PC-3 (cell line): ENCODE measurements at regions of chr10 and their contacts with region 1.

Region 1: DNA sequence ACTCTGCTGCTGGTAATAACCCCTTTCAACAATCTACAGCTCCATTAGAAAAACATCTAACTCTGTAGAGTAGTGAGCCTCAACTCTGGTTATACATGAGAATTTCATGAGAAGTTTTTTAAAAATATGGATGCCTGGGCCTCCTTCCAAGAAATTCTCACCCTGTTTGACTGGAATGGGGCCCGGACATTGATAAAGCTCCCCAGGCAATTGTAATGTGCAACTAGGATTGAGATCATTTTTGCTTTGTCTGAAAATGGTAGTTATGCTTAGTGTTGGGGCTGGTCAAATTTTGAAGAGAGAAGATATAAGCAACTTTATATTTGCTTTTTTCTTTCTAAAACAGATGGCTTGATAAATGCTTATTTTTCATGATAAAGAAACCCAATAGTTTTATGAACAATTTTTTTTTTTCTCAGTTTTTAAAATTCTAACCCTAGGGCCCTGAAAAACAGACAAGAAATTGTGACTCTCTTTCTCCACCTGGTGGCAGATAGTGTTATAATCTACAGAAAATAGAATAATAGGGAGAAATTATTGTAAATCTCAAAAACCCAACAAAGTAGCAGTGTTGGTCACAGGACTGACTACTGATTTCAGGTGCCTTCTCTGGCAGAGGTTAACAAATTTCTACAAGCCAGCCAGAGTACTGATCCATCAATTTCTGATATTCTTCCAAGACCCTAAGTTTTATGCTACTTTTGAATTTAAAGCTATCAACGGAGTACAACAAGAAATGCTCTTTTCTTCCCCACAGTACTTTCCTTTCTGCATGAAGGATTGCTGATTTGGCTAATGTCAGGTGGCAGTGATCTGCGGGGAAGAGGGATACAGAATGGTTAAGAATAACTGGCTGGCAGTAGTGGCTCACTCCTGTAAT is 174.8 kb downstream of the DKK1 start:
- DNase-seq: peak; percentile 99
- ATAC-seq: peak; percentile 21
- H3K4me3 ChIP-seq: peak overlapping the region; percentile 10; the same call in 1 of the 2 replicates
- H3K27ac ChIP-seq: peak overlapping the region; percentile 78
- H3K4me1 ChIP-seq: peaks cover 64% of the 10 kb centered on the region
- H3K27me3 ChIP-seq: no peaks in the 10 kb centered on the region
- CTCF ChIP-seq: peak; percentile 99

Region 2: GRCh38 chr10:52215745-52216361 is 273.0 kb before region 1 on chr10:
- CTCF ChIA-PET with region 1: no interaction called
- POLR2A ChIA-PET with region 1: no interaction called
- intact Hi-C with region 1: loop called (anchors 1 kb)
- DNase-seq: peak; percentile 96
- ATAC-seq: peak; percentile 58
- H3K4me3 ChIP-seq: no peak overlapping the region
- H3K27ac ChIP-seq: peak overlapping the region; percentile 65
- H3K4me1 ChIP-seq: peaks cover 24% of the 10 kb centered on the region
- H3K27me3 ChIP-seq: no peaks in the 10 kb centered on the region
- CTCF ChIP-seq: peak; percentile 99

Region 3: DNA sequence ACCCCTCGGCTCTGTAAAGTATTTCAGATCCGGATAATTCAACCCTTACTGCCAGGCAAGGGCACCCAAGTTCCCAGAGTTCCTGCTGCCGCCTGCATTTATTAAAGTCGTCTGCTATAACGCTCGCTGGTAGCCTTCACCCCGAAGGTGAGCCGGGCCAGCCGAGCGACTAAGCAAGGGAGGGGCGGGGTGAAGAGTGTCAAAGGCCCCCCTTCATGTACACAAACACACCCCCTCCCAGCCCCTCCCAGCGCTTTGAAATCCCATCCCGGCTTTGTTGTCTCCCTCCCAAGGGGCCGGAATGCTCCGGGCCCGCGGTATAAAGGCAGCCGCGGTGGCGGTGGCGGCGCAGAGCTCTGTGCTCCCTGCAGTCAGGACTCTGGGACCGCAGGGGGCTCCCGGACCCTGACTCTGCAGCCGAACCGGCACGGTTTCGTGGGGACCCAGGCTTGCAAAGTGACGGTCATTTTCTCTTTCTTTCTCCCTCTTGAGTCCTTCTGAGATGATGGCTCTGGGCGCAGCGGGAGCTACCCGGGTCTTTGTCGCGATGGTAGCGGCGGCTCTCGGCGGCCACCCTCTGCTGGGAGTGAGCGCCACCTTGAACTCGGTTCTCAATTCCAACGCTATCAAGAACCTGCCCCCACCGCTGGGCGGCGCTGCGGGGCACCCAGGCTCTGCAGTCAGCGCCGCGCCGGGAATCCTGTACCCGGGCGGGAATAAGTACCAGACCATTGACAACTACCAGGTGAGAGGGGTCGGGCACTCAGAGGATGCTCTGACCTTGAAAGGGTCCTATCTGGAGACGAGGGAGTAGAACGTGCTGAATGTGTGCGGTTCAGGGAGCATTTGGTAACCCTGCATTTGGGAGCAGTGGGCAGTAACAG is 174.7 kb before region 1 on chr10 and contains the start of gene DKK1:
- CTCF ChIA-PET with region 1: interaction called, 56 read pairs
- POLR2A ChIA-PET with region 1: interaction called, 30 read pairs
- intact Hi-C with region 1: loop called (anchors 1 kb)
- DNase-seq: peak; percentile 100
- ATAC-seq: peak; percentile 55
- H3K4me3 ChIP-seq: peak within 1 kb of the TSS; percentile 76
- H3K27ac ChIP-seq: peak within 1 kb of the TSS; percentile 82
- H3K4me1 ChIP-seq: peaks cover 49% of the 10 kb centered on the region
- H3K27me3 ChIP-seq: no peaks in the 10 kb centered on the region
- CTCF ChIP-seq: peak; percentile 100
- total RNA-seq, gene DKK1: 1,187 and 1,592 TPM in 2 replicates

Region 4: GRCh38 chr10:52400564-52400963 is 88.3 kb before region 1 on chr10:
- CTCF ChIA-PET with region 1: no interaction called
- POLR2A ChIA-PET with region 1: no interaction called
- intact Hi-C with region 1: no loop called
- DNase-seq: peak; percentile 42
- ATAC-seq: peak; percentile 69
- H3K4me3 ChIP-seq: no peak overlapping the region
- H3K27ac ChIP-seq: no peak overlapping the region
- H3K4me1 ChIP-seq: no peaks in the 10 kb centered on the region
- H3K27me3 ChIP-seq: no peaks in the 10 kb centered on the region
- CTCF ChIP-seq: no peak

Region 5: DNA sequence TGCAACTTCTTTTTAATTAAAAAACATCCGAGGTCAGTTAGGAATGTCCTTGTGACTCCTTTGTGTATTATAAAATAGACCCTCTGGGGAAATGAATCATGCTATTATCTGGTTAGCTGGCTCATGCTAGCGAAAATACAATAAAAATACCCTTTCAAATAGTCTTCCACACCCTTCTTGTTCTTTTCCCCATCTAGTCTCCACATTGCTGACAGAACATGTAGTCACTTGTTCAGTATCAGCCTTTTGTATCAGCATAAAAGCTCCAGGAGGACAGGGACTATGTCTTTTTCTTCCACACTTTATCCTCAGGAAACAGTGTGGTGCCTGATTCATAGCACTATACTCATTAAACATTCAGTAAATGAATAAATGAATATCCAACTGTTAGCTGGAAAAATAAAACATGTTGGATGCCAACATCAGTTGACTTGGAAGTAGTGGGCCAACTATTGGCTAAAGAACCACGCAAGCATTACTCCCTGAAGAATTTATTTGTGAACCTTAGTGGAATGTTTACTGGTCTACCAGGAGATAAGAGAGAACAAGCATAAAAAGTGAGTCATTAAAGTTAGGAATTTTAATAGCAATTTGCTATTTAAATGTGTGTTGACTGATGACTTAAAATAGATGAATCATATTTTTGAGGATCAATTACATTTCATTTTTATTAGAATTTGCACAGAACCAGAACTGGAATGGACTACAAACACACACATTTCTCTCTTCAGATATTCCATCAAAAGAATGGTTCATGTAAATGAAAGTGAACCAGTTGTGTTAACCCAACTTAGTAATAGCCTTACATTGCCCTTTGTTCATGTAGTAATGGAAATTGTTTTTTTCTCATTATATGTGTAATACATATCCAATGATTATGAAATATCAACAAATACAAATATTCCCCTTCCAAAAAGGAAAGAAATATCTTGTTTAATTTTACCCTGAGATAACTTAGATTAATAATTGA is 45.1 kb before region 1 on chr10:
- CTCF ChIA-PET with region 1: interaction called, 8 read pairs
- POLR2A ChIA-PET with region 1: interaction called, 7 read pairs
- intact Hi-C with region 1: loop called (anchors 1 kb)
- DNase-seq: peak; percentile 100
- ATAC-seq: peak; percentile 80
- H3K4me3 ChIP-seq: peak overlapping the region; percentile 36
- H3K27ac ChIP-seq: peak overlapping the region; percentile 82
- H3K4me1 ChIP-seq: peaks cover 62% of the 10 kb centered on the region
- H3K27me3 ChIP-seq: no peaks in the 10 kb centered on the region
- CTCF ChIP-seq: no peak

Region 6: DNA sequence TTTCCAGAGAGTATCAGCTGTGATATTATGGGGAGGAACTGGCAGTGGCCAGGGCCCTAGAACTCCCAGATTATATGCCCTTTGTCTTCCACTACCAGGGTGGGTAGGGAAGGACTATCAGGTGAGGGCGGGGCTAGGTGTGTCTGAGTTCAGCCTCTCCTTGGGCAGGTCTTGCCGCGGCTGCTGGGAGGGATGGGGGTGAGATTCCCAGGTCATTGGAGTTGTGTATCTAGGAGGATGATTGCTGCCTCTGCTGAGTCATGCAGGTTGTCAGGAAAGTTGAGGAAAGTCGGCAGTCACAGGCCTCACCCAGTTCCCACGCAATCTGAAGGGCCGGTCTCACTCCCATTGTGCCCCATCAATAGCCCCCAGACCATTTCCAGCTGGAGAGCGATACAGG is 10.4 kb after region 1 on chr10:
- CTCF ChIA-PET with region 1: no interaction called
- POLR2A ChIA-PET with region 1: no interaction called
- intact Hi-C with region 1: no loop called
- DNase-seq: no peak
- ATAC-seq: no peak; the same call in 1 of the 2 replicates
- H3K4me3 ChIP-seq: no peak overlapping the region
- H3K27ac ChIP-seq: no peak overlapping the region
- H3K4me1 ChIP-seq: no peaks in the 10 kb centered on the region
- H3K27me3 ChIP-seq: no peaks in the 10 kb centered on the region
- CTCF ChIP-seq: no peak

Region 7: GRCh38 chr10:52525761-52526160 is 36.9 kb after region 1 on chr10:
- CTCF ChIA-PET with region 1: interaction called, 4 read pairs
- POLR2A ChIA-PET with region 1: no interaction called
- intact Hi-C with region 1: loop called (anchors 1 kb)
- DNase-seq: peak; percentile 89
- ATAC-seq: peak; percentile 98
- H3K4me3 ChIP-seq: no peak overlapping the region
- H3K27ac ChIP-seq: peak overlapping the region; percentile 1; the same call in 1 of the 2 replicates
- H3K4me1 ChIP-seq: peaks cover 21% of the 10 kb centered on the region
- H3K27me3 ChIP-seq: no peaks in the 10 kb centered on the region
- CTCF ChIP-seq: no peak

Region 8: GRCh38 chr10:52637592-52637991 is 148.7 kb after region 1 on chr10:
- CTCF ChIA-PET with region 1: interaction called, 4 read pairs
- POLR2A ChIA-PET with region 1: no interaction called
- intact Hi-C with region 1: loop called (anchors 2 kb)
- DNase-seq: peak; percentile 99
- ATAC-seq: peak; percentile 84
- H3K4me3 ChIP-seq: no peak overlapping the region
- H3K27ac ChIP-seq: peak overlapping the region; percentile 1
- H3K4me1 ChIP-seq: peaks cover 26% of the 10 kb centered on the region
- H3K27me3 ChIP-seq: no peaks in the 10 kb centered on the region
- CTCF ChIP-seq: no peak